AG04449 (cell line): ENCODE measurements at regions of chr15 and their contacts with region 1.

Region 1: GRCh38 chr15:74842581-74843444 is at the start of gene ULK3:
- DNase-seq: no peak
- H3K4me3 ChIP-seq: peak within 1 kb of the TSS; percentile 87
- CTCF ChIP-seq: peak; percentile 71

Region 2: DNA sequence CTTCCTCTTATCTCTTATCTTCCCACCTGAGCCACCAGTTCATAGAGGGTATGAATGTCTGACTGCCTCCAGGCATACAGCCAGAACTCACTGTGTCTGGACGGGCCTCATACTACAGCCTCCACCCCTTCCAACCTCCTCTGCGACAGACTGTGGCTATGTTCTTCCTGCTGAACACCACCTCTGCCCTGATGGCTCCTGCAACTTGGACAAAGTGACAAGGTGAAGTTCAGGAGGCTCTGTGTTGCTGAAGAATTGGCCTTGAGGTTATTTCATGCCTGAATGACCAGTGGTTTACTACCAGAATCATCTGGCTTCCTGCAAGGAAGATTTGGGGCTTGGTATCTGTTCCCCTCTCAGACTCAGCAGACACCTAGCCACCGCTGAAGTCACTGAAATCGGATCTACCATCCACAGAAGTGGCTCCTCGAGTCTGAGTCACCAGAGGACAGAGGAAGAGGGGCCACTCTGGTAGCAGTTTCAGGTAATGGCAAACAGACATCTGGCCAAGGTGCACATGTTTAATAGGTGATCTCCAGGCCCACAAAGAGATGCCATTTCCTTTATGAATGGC is 14.4 kb after region 1 on chr15:
- CTCF ChIA-PET with region 1: interaction called, 14 read pairs
- POLR2A ChIA-PET with region 1: interaction called, 3 read pairs
- DNase-seq: no peak
- H3K4me3 ChIP-seq: no peak overlapping the region
- CTCF ChIP-seq: no peak